ENCODE measurements at regions of chr5 and their contacts with region 1.

Region 1: GRCh38 chr5:150129813-150130492 is 25.7 kb downstream of the PDGFRB start:
- DNase-seq: peak; percentile 71
- ATAC-seq: peak; percentile 79
- H3K4me3 Mint-ChIP-seq: no peak overlapping the region
- H3K27ac Mint-ChIP-seq: no peak overlapping the region
- H3K4me1 Mint-ChIP-seq: peaks cover 9% of the 10 kb centered on the region
- H3K27me3 Mint-ChIP-seq: no peaks in the 10 kb centered on the region

Region 2: DNA sequence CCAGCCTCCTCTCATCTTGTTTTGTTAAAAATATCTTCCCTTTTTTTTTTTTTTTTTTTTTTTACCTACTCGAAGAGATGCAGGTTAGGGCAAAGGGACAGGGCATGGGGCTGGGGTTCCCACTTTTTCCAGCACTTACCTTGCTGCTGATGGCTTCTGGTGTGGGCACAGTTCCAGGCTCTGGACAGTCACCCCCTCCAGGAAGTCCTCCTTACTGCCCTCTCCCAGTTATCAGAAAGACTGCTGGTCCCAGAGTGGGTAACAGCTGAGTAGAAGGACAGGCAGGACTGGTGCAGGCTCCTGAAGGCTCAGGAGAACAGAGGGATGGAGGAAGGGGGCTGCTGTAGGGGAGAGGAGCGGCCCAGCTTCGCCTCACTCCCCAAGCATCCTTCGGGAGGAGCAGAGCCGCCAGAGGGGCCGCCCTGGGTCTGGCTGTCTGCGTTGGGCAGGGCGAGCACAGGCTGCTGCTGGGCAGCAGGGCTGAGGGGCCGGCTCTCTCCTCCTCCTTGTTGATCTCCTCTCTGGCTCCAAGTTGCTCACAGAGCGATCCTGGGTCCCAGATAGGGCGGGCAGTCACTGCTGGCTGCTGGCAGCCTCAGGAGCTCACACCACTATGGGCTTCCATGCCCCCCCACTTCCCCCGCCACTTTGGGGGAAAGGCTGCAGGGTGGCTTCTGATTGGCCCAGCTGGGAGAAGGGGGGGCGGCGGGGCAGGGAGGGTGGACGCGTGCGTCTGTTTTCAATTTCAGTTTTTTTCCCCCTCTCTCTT is 25.5 kb after region 1 on chr5 and contains the start of gene PDGFRB:
- CTCF ChIA-PET with region 1: interaction called, 20 read pairs
- DNase-seq: peak; percentile 88
- ATAC-seq: peak; percentile 83
- H3K4me3 Mint-ChIP-seq: peak within 1 kb of the TSS; percentile 88
- H3K27ac Mint-ChIP-seq: peak within 1 kb of the TSS; percentile 86
- H3K4me1 Mint-ChIP-seq: peaks cover 51% of the 10 kb centered on the region
- H3K27me3 Mint-ChIP-seq: peaks cover 11% of the 10 kb centered on the region
- total RNA-seq, gene PDGFRB: 53.3 to 68.9 TPM

Region 3: DNA sequence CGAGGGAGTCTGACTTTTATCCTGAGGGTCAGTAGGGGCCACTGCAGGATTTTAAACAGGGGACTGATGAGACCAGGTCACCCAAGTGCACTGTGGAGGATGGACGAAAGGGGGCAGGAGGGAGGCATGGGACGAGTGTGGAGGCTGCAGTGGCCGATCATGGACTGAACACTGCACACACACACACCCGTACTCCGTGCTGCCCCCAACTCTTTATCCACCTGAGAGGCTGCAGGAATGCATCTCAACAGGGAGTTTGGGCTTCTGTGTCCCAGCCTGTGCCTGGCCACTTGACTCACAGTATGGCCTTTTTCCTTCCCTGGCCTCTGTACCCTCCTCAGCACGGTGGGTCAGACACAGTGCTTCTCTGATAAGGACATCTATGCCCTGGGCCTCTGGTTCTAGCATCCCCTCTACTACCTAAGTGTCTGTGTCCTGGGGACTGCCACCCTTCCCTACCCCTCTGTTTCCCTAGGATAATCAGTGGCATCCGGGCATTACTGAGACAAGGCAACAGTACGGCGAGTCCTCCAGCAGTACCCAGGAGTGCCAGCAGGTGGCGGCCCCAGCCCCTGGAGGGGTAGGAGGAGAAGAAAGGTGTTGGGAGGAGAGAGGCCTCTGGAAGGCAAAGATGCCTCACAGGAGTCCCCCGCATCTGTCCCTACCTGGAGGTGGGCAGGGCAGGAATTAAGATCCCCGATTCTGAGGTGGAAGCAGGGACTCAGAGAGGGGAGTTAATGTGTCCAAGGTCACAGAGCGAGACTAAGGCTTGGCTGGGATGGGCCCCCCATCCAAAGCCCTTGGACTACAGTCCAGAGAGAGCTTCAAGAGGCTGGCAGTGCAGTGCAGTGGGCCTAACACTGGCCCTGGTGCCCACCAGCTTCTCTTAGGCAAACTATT is 31.5 kb after region 1 on chr5:
- CTCF ChIA-PET with region 1: interaction called, 20 read pairs
- DNase-seq: peak; percentile 88
- ATAC-seq: peak; percentile 93
- H3K4me3 Mint-ChIP-seq: no peak overlapping the region
- H3K27ac Mint-ChIP-seq: no peak overlapping the region
- H3K4me1 Mint-ChIP-seq: peaks cover 4% of the 10 kb centered on the region
- H3K27me3 Mint-ChIP-seq: peaks cover 21% of the 10 kb centered on the region

Region 4: GRCh38 chr5:150175076-150175935 is 45.4 kb after region 1 on chr5:
- CTCF ChIA-PET with region 1: interaction called, 33 read pairs
- DNase-seq: no peak
- ATAC-seq: peak; percentile 61
- H3K4me3 Mint-ChIP-seq: no peak overlapping the region
- H3K27ac Mint-ChIP-seq: no peak overlapping the region
- H3K4me1 Mint-ChIP-seq: no peaks in the 10 kb centered on the region
- H3K27me3 Mint-ChIP-seq: peaks cover 38% of the 10 kb centered on the region

Region 5: DNA sequence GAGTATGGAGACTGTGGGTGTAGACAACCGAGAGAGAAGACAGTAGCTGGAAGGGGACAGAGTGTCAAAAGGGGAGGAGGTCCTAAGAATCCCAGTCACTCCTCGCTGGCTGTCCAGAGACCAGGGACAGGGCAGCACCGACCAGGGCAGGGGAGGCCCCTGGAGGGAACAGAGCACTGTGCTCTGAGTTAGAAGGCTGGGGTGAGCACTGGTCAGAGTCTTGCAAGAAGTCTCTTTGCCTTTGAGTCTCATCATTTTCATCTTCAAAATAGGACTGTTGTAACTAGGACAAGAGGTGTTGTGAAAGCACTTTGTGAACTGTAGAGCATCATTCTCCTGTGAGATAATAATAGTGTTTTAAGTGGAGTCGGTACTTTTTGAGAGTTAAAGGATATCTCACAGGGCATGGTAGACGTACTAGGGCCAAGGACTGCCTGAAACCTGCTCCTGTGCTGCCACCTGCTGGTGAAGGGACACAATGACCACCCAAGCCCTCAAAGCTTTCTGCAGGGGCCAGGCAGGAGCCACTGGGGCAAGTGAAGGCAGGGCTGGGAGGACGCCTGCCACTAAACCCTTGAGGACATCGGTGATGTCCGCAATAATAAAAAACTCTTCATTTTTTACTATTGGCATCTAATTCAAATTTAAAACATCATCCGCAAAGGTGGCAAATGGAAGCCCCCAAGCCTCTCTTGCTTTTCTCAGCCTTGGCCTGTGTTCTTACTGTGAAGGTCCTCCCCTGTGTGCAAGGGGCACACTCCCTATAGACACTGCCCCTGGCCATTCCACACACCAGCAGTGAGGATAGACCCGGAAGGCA is 88.1 kb after region 1 on chr5:
- CTCF ChIA-PET with region 1: interaction called, 85 read pairs
- DNase-seq: peak; percentile 90
- ATAC-seq: peak; percentile 98
- H3K4me3 Mint-ChIP-seq: no peak overlapping the region
- H3K27ac Mint-ChIP-seq: no peak overlapping the region
- H3K4me1 Mint-ChIP-seq: no peaks in the 10 kb centered on the region
- H3K27me3 Mint-ChIP-seq: peaks cover 30% of the 10 kb centered on the region

Region 6: GRCh38 chr5:150258130-150258529 is 128.2 kb after region 1 on chr5:
- CTCF ChIA-PET with region 1: no interaction called
- DNase-seq: no peak
- ATAC-seq: peak; percentile 63
- H3K4me3 Mint-ChIP-seq: no peak overlapping the region
- H3K27ac Mint-ChIP-seq: no peak overlapping the region
- H3K4me1 Mint-ChIP-seq: no peaks in the 10 kb centered on the region
- H3K27me3 Mint-ChIP-seq: peaks cover 2% of the 10 kb centered on the region

Region 7: GRCh38 chr5:150350524-150351344 is 220.8 kb after region 1 on chr5:
- CTCF ChIA-PET with region 1: interaction called, 14 read pairs
- DNase-seq: peak; percentile 80
- ATAC-seq: peak; percentile 93
- H3K4me3 Mint-ChIP-seq: no peak overlapping the region
- H3K27ac Mint-ChIP-seq: peak overlapping the region; percentile 58
- H3K4me1 Mint-ChIP-seq: peaks cover 28% of the 10 kb centered on the region
- H3K27me3 Mint-ChIP-seq: peaks cover 4% of the 10 kb centered on the region